CD4-positive, alpha-beta T cell (primary cell): ENCODE measurements at regions of chr1 and their contacts with region 1.

Region 1: DNA sequence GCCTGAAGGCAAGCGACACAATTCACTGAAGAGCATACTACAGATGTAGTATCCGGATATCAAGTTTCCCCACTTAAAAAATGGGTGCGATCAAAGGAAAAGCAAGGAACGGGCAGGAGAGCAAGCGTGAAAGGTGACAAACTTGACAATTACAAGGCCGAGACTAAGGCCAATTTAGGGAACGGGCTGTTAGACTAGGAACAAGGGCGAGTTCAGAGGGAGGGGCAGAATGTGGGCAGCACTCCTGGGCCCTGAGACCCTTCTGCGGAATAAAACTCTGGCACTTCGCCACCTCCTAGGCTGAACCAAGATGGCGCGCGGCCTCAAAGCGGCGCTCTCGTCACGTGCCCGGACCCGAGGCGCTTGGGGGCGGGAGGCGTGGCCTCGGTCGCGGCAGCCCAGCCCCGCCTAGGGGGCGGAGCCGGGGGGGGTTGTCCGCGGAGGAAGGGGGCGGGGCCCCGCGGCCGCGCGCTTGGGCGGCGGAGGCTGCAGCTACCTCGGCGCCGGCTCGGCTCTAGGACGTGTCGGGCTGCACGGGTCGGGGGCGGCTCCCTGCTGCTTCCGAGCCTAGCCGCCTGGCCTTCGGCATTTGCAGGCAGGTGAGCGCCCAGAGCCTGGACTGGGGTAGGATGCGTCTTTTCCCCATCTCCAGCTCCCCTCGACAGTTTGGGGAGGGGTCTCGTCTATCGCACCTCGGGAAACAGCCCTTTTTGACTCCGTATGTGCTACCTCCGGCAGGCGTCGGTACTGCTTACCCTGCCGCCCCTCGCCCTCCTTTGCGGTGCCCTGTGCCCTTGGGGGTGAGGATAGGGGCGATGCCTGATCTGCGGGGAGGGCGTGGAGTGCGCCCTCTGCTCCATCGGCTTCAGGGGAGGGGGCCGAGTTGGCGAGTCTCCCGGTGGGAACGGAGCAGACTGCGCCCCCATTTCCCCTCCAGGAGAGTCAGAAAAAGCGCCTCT is at the start of gene PPFIA4:
- DNase-seq: peak; percentile 74 to 95 (median 86)
- ATAC-seq: peak; percentile 93
- H3K4me3 ChIP-seq: peak within 1 kb of the TSS; percentile 89
- H3K4me3 Mint-ChIP-seq: peak within 1 kb of the TSS; percentile 85
- H3K27ac ChIP-seq: peak within 1 kb of the TSS; percentile 26 to 63
- H3K27ac Mint-ChIP-seq: peak within 1 kb of the TSS; percentile 79
- H3K4me1 ChIP-seq: peaks cover 17% of the 10 kb centered on the region
- H3K4me1 Mint-ChIP-seq: peaks cover 14% of the 10 kb centered on the region
- H3K27me3 ChIP-seq: no peaks in the 10 kb centered on the region
- H3K27me3 Mint-ChIP-seq: no peaks in the 10 kb centered on the region
- CTCF ChIP-seq: no peak
- total RNA-seq, gene PPFIA4: 0.93 to 0.98 TPM

Region 2: GRCh38 chr1:202957733-202958543 is 68.4 kb before region 1 on chr1 and contains the start of gene ADIPOR1:
- CTCF ChIA-PET with region 1: no interaction called
- POLR2A ChIA-PET with region 1: no interaction called
- intact Hi-C with region 1: loop called in 1 of 2 experiments (anchors 1 kb)
- DNase-seq: peak; percentile 88 to 97 (median 95)
- ATAC-seq: peak; percentile 96
- H3K4me3 ChIP-seq: peak within 1 kb of the TSS; percentile 98
- H3K4me3 Mint-ChIP-seq: peak within 1 kb of the TSS; percentile 98
- H3K27ac ChIP-seq: peak within 1 kb of the TSS; percentile 81
- H3K27ac Mint-ChIP-seq: peak within 1 kb of the TSS; percentile 95
- H3K4me1 ChIP-seq: peaks cover 38% of the 10 kb centered on the region
- H3K4me1 Mint-ChIP-seq: peaks cover 55% of the 10 kb centered on the region
- H3K27me3 ChIP-seq: no peaks in the 10 kb centered on the region
- H3K27me3 Mint-ChIP-seq: no peaks in the 10 kb centered on the region
- CTCF ChIP-seq: peak; percentile 22
- total RNA-seq, gene ADIPOR1: 91.5 to 95.6 TPM

Region 3: DNA sequence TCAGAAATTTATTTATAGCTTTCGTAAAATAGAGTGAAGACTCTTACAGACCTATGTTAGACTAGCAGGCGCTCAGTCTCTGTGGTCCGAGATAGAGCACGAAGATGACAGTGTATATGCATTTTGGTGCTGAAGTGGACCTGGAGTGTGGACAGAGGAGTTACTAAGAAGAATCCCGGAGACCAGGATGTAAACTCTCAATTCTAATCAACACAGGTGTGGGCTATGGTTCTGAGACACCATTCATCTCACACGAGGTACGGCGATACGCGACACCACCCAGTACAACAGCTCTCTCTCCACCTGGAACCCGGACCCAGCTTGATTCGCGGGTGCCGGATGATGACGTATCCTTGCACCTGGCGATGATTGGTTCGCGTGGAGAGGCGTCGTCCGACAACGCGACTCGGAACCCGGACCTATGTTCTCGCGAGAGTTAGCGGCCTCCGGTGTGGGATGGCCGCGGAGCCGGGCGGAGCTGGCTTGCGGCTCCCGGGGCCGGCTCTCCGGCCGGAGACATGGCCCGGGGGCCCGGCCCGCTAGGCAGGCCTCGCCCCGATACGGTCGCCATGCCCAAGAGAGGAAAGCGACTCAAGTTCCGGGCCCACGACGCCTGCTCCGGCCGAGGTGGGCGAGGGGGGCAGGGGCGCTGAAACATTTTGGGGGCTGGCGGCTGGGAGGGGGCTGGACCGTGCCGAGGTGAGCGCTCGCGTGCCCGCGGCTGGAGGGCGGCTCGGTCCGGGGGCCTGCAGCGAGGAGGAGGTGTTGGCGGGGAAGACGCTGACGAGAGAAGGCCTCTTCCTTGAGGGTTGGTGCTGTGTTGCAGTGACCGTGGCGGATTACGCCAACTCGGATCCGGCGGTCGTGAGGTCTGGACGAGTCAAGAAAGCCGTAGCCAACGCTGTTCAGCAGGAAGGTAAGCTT is 19.1 kb before region 1 on chr1 and contains the start of gene TMEM183A:
- CTCF ChIA-PET with region 1: interaction called, 8 read pairs
- POLR2A ChIA-PET with region 1: interaction called, 19 read pairs
- intact Hi-C with region 1: loop called in 1 of 2 experiments (anchors 2 kb)
- DNase-seq: peak; percentile 88 to 98 (median 92)
- ATAC-seq: peak; percentile 94
- H3K4me3 ChIP-seq: peak within 1 kb of the TSS; percentile 71
- H3K4me3 Mint-ChIP-seq: peak within 1 kb of the TSS; percentile 99
- H3K27ac ChIP-seq: peak within 1 kb of the TSS; percentile 71 to 96
- H3K27ac Mint-ChIP-seq: peak within 1 kb of the TSS; percentile 95
- H3K4me1 ChIP-seq: peaks cover 19% of the 10 kb centered on the region
- H3K4me1 Mint-ChIP-seq: peaks cover 35% of the 10 kb centered on the region
- H3K27me3 ChIP-seq: no peaks in the 10 kb centered on the region
- H3K27me3 Mint-ChIP-seq: no peaks in the 10 kb centered on the region
- CTCF ChIP-seq: no peak
- total RNA-seq, gene TMEM183A: 187 to 194 TPM

Region 4: GRCh38 chr1:203038891-203039608 is 12.7 kb after region 1 on chr1:
- CTCF ChIA-PET with region 1: interaction called, 7 read pairs
- POLR2A ChIA-PET with region 1: interaction called, 10 read pairs
- intact Hi-C with region 1: no loop called
- DNase-seq: peak; percentile 39 to 80 (median 53)
- ATAC-seq: peak; percentile 94
- H3K4me3 ChIP-seq: no peak overlapping the region
- H3K4me3 Mint-ChIP-seq: no peak overlapping the region
- H3K27ac ChIP-seq: no peak overlapping the region
- H3K27ac Mint-ChIP-seq: no peak overlapping the region
- H3K4me1 ChIP-seq: no peaks in the 10 kb centered on the region
- H3K4me1 Mint-ChIP-seq: no peaks in the 10 kb centered on the region
- H3K27me3 ChIP-seq: peaks cover 4 to 6% of the 10 kb centered on the region in 2 experiments
- H3K27me3 Mint-ChIP-seq: peaks cover 6% of the 10 kb centered on the region
- CTCF ChIP-seq: peak; percentile 81